Activated CD8-positive, alpha-beta T cell treated with anti-CD3 and anti-CD28 coated beads, Interleukin-2, amount 10 ng/mL, durations not matched to agents 7 days and 5 days (primary cell): ENCODE measurements at regions of chr17 and their contacts with region 1.

Region 1: DNA sequence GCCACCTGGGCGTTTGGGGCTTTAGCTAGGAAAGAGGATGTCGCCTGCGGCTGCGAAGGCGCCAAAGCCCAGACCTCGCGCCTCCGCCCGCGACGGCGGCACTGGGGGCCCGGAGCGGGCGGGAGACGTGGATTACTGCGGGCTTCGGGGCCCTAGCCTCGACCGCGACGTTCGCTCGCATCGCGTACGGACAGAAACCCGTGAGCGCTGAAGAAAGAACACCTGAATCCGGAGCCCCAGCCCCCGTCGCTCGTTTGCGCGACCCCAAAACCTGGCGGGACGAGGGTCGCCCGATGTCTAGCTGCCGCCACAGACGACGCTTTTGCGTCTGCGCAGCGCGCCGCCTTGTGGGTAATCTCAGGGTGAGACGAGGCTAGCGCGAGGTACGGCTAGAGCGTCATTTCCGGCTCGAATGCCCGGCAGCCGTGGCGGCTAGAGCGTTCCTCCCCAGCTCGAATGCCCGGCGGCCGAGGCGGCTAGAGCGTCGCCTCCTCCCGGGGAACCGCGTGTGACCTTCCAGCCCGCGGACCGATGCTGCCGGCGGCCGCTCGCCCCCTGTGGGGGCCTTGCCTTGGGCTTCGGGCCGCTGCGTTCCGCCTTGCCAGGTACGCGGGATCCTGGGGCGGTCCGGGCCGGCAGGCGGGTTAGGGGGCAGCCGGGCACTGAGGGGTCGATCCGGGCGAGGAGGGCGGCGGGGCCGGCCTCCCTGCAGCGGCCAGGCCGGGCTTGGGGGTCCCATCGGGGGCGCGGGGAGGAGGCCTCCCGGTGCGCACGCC is at the start of gene MRPL12:
- DNase-seq: peak; percentile 94
- ATAC-seq: peak; percentile 89
- H3K4me3 Mint-ChIP-seq: peak within 1 kb of the TSS; percentile 95
- H3K27ac Mint-ChIP-seq: peak within 1 kb of the TSS; percentile 96
- H3K4me1 Mint-ChIP-seq: peaks cover 35% of the 10 kb centered on the region
- H3K27me3 Mint-ChIP-seq: no peaks in the 10 kb centered on the region
- total RNA-seq, gene MRPL12: 102 to 104 TPM

Region 2: DNA sequence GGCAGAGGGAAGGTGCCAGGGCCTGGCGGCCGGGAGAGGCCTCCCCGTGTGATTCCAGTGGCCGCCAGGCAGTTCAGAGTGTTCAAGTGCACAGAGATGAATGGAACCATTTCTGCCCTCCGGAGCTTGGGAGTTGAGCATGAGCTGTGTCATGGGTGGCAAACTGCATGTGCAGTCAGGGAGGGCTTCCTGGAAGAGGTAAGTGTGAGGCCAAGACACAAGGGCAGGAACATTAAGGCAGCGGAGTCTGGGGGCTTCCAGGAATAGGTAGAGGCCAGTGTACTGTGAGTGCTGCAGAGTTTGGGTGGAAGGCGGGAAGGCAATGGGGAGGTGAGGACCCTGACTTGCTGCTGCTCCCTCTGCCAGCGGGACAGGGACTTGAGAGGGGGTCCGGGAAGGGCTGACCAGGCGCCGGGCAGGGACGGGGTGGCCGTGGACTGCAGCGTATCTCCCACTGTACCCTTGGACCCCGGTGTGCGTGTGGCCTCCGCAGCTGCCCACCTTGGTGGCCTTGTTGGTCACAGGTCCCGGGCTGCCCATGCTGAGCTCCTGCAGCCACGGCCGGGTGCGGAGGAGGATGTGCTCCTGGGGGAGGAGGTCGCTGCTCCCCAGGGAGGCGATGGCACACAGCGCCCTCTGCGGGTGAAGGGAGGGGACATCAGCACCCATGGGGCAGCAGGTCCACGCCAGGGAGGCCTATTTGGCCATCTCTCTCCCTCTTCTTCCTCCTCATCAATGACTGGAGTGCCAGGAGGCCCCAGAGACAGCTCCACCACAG is 472.9 kb before region 1 on chr17:
- CTCF ChIA-PET with region 1: no interaction called
- POLR2A ChIA-PET with region 1: no interaction called
- DNase-seq: no peak
- ATAC-seq: no peak
- H3K4me3 Mint-ChIP-seq: no peak overlapping the region
- H3K27ac Mint-ChIP-seq: no peak overlapping the region
- H3K4me1 Mint-ChIP-seq: peaks cover 10% of the 10 kb centered on the region
- H3K27me3 Mint-ChIP-seq: no peaks in the 10 kb centered on the region

Region 3: DNA sequence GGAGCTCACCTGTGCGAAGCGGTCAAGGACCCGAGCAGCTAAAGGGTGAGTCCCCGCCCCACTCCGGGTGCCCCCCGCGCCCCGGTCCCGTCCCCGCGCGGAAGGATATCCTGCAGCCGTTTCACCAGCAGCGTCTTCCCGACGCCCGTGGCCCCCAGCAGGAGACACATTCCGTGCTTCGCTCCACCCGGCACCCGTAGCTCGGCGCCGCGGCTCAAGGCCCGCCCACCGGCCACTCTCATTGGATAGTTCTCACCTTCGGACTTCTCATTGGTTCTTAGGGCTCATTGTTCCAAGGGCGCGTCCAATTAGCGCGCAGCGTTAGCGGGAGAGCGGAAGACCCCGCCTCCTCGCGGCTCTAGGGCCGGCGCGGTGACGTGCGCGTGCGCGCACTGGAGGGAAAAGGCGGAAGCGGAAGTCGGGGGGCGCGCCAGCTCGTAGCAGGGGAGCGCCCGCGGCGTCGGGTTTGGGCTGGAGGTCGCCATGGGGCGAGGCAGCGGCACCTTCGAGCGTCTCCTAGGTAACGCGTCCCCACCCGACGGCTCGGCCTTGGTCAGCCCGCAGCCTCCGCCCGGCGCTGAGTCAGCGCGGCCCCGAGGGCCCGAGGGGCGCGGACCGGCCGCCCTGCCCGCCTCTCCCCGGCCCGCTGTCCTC is 19.4 kb before region 1 on chr17 and contains the starts of genes ARL16 and HGS:
- CTCF ChIA-PET with region 1: interaction called, 12 read pairs
- POLR2A ChIA-PET with region 1: interaction called, 50 read pairs
- DNase-seq: peak; percentile 98
- ATAC-seq: peak; percentile 99
- H3K4me3 Mint-ChIP-seq: peak within 1 kb of the TSS; percentile 88
- H3K27ac Mint-ChIP-seq: peak within 1 kb of the TSS; percentile 90
- H3K4me1 Mint-ChIP-seq: peaks cover 34% of the 10 kb centered on the region
- H3K27me3 Mint-ChIP-seq: no peaks in the 10 kb centered on the region
- total RNA-seq, gene ARL16: 21.3 to 28.4 TPM
- total RNA-seq, gene HGS: 107 to 128 TPM